ENCODE measurements at regions of chr18 and their contacts with region 1.

Region 1: DNA sequence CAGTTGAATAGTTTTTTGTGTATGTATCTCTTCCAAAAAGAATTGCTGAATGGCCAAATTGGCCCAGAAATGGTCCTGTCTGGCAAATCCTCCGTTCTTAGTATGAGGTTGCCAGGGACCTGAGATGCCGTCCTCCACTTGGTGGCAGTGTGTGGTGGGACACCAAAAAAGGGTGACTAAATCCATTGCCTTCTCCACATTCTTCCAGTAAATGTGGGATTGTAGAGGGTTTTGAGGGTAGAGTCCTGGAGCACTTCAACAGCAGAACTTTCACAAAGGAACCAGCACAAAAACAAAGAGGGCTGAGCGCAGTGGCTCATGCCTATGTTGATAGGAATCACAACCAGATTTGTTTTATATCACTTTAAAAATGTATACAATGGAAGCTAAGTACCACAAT is 199.9 kb downstream of the BCL2 start:
- DNase-seq: no peak
- ATAC-seq: peak in 6 of 8 donors; percentile 29 to 77 (median 67)
- H3K4me3 ChIP-seq: no peak overlapping the region
- H3K27ac ChIP-seq: no peak overlapping the region
- H3K4me1 ChIP-seq: peaks cover 0 to 21% (median 7%) of the 10 kb centered on the region in 9 donors
- H3K27me3 ChIP-seq: no peaks in the 10 kb centered on the region
- CTCF ChIP-seq: peak in 8 of 9 donors; percentile 12 to 68 (median 50)

Region 2: DNA sequence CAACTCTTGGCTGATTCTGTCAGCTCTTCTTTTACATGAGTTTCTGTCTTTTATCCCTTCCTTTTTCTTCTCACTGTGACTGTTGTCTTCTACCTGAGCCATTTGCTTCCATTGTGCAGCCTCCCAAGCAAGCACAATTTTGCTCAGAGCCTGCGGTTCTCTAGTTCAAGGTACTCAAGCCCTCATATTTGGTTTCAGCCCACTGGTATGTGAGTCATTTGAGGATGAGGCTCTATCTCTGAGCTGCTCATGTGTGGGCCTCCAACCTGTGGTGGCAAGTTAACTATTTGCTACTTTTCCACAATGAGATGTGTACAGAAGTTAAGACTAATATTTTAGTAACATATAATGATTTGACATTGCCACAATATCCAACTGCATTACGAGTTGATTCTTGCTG is 221.3 kb before region 1 on chr18:
- intact Hi-C with region 1: no loop called
- DNase-seq: no peak
- ATAC-seq: no peak
- H3K4me3 ChIP-seq: no peak overlapping the region
- H3K27ac ChIP-seq: no peak overlapping the region
- H3K4me1 ChIP-seq: peaks cover 0 to 7% (median 0%) of the 10 kb centered on the region in 9 donors
- H3K27me3 ChIP-seq: no peaks in the 10 kb centered on the region
- CTCF ChIP-seq: no peak

Region 3: GRCh38 chr18:63031375-63031774 is 88.3 kb before region 1 on chr18:
- intact Hi-C with region 1: loop called in 4 of 10 experiments (anchors 5 to 10 kb)
- DNase-seq: no peak
- ATAC-seq: no peak
- H3K4me3 ChIP-seq: no peak overlapping the region
- H3K27ac ChIP-seq: no peak overlapping the region
- H3K4me1 ChIP-seq: no peaks in the 10 kb centered on the region
- H3K27me3 ChIP-seq: no peaks in the 10 kb centered on the region
- CTCF ChIP-seq: no peak

Region 4: DNA sequence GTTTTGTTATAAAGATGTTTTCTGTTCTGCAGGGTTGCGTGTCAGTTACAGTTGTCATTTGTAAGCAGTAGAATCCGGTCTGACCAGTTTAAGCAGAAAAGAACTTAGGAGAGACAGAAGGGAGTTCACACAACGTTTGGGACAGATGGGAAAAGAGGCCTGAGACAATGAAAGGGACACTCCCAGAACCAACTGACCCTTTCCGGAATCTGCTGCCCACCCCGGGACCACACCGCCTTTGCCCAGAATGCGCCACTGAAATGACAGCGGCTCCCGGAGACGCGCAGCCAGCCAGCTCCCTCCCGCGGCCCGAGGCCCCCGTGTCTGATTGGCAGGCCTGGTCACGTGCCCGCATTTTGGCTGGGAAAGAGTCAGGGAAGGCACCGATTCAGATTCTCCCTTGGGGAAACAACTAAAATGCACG is 44.7 kb before region 1 on chr18:
- intact Hi-C with region 1: loop called in 1 of 10 experiments (anchors 5 kb)
- DNase-seq: peak; percentile 78 to 82
- ATAC-seq: peak; percentile 91 to 99 (median 97)
- H3K4me3 ChIP-seq: peak overlapping the region in 9 of 10 donors; percentile 26 to 57 (median 52)
- H3K27ac ChIP-seq: peak overlapping the region in 9 of 10 donors; percentile 23 to 73 (median 56)
- H3K4me1 ChIP-seq: peaks cover 0 to 14% (median 0%) of the 10 kb centered on the region in 9 donors
- H3K27me3 ChIP-seq: no peaks in the 10 kb centered on the region
- CTCF ChIP-seq: peak in 2 of 9 donors; percentile 11 to 18

Region 5: DNA sequence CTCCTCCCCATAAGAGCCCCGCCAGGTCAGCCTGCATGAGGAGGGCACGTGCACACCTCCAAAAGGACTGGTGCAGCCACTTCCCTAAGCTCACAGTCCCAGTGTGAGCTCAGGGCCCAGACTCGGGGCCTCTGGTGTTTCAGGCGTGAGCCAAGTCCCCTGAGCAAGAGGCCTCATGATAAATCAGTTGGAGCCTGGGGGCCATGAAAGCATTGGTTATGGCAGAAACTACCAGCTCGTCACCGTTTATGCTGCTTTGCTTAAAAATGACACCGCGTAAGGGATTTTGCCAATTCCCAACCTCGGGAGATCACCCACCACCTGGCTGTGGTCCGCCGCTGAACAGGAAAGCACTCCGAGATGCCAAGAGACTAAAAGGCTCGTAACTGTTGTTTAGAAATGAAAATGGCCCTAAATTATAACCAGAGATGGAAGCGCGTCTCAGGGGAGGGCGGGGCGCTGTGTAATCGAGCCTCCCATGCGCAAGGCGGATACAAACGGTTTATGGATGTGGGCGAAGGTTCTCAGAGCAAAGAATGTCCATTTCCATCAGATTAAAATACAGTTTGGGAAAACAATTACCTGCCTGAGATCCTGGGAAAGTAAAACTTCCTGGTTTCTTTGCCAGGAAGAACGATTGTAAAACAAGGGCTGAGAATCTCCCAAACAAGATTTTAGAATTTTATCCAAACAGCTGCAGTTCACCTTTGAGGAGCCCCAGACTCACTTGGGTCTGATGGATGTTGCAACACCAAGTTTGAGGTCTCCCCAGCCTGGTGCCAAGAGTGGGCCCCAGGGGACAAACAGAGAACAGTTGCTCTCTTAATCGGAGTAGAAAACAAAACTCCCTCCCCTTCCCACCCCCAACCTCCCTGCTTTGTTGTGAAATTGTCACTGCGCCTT is 58.5 kb after region 1 on chr18:
- intact Hi-C with region 1: loop called in 1 of 10 experiments (anchors 10 kb)
- DNase-seq: peak; percentile 48 to 73
- ATAC-seq: peak; percentile 52 to 80 (median 63)
- H3K4me3 ChIP-seq: peak overlapping the region in 6 of 10 donors; percentile 3 to 46 (median 32)
- H3K27ac ChIP-seq: peak overlapping the region in 9 of 10 donors; percentile 9 to 85 (median 47)
- H3K4me1 ChIP-seq: peaks cover 4 to 71% (median 28%) of the 10 kb centered on the region in 9 donors
- H3K27me3 ChIP-seq: no peaks in the 10 kb centered on the region
- CTCF ChIP-seq: no peak

Region 6: DNA sequence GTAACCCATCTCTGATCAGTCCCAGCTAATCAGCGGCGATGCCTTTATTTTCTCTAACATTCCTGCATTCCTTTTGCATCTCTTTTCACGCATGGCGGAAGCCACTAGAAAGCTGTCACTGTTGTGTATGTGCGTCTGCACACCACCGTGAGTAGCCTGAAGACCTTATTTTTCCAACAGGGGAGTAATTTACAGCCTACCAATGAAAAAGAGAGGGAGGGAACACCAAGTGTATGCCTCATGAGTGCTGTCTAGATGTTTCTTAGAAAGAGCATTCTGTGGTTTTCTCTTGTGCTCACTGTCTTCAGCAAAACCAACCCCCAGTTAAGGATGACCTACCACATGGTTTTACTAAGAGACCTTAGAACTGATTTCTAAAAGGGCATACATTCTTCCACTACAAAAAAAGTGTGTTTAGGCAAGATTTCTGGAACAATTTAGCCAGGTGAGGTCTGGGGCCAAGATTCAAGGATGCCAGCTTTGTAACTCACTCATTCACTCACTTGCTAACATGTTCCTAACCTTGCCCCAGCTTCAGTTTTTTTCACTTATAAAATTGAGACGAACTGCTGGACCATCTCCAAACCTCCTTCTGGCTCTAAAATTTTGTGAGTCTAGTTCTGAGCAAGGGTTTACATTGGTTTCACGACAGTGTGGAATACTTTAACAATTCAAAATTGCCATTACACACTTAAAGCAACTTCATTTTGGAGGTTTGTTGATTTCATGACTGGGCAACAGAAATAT is 148.5 kb after region 1 on chr18:
- intact Hi-C with region 1: loop called in 1 of 10 experiments (anchors 5 kb)
- DNase-seq: no peak
- ATAC-seq: no peak
- H3K4me3 ChIP-seq: no peak overlapping the region
- H3K27ac ChIP-seq: no peak overlapping the region
- H3K4me1 ChIP-seq: peaks cover 0 to 34% (median 16%) of the 10 kb centered on the region in 9 donors
- H3K27me3 ChIP-seq: no peaks in the 10 kb centered on the region
- CTCF ChIP-seq: no peak

Region 7: DNA sequence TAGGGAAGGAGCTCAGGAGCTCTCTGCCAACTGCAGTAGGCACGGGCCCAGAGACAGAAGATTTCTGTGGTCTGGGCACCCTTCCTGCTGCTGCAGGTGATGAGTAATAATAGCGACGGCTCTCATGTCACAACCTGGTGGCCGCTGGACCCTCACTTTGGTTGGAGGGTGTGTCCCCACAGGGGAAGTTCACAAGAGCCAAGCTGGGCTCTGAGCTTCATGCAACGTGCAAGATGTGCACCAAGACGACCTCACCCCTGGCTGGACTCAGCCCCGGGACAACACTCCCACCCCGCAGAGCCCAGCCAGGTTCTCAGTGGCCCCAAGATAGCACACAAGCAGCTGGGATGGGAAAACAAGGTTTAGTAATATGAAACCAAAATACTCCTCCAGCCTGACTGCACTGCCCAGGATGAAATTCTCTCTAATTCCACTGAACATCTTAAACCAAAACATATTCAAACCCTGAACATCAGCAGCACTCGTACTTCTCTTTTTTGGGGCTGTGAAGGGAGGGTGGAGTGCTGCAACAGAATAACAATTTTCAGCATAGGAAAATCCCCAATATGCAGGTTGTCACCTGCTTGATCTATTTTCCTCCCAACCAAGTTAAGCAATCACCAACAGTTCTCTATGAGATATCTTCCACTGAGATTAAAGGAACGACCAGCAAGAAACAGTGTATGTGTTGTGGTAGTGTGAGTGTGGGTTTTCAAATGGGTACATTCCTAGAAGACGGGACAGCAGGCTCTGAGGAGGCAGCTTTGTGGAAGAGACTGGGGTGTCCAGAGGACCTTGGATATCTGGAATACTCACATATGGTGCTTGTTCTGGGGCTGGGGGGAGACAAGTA is 173.4 kb after region 1 on chr18:
- intact Hi-C with region 1: no loop called
- DNase-seq: no peak
- ATAC-seq: peak in 1 of 8 donors; percentile 26
- H3K4me3 ChIP-seq: no peak overlapping the region
- H3K27ac ChIP-seq: peak overlapping the region in 5 of 10 donors; percentile 11 to 31 (median 19)
- H3K4me1 ChIP-seq: peaks cover 0 to 60% (median 41%) of the 10 kb centered on the region in 9 donors
- H3K27me3 ChIP-seq: no peaks in the 10 kb centered on the region
- CTCF ChIP-seq: no peak

Region 8: DNA sequence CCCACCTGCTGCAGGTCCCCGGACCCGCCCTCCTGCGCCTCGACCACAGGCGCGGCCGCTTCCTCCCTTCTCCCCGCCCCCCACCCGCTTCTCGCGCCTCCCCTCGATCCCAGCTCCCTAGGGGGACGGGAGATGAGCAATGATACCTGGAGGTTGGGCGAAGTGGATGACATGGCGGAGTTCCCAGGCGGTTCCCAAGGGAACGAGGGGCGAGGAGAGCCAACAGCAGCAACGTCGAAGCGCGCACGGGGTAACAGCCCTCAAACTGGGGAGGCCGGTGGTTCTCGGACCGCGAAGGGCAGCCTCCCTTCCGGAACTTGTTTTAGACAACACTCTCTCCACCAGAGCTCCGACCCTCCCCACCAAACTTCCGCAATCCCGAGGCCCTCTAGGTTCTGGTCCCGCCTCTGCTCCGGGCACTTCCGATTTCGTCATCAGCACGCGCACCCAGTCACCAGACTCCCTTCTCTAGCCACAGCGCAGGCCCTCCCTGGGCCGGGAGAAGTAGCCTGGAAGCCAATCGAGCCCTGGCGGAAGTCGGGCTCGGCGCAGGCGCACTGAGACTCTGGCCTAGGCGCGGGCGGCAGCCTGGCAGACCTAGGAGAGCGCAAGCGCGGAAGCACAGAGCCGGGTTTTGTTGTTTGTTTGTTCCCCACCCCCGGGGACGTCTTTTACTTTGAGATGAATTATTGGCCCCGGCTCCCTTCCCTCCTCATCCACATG is 302.6 kb after region 1 on chr18 and contains the start of gene VPS4B:
- intact Hi-C with region 1: loop called in 1 of 10 experiments (anchors 10 kb)
- DNase-seq: peak; percentile 99 to 100
- ATAC-seq: peak; percentile 99
- H3K4me3 ChIP-seq: peak within 1 kb of the TSS; percentile 65 to 97 (median 86)
- H3K27ac ChIP-seq: peak within 1 kb of the TSS; percentile 92 to 99 (median 94)
- H3K4me1 ChIP-seq: peaks cover 5 to 47% (median 24%) of the 10 kb centered on the region in 9 donors
- H3K27me3 ChIP-seq: no peaks in the 10 kb centered on the region
- CTCF ChIP-seq: no peak
- total RNA-seq, gene VPS4B: 19.7 to 39.6 (median 22.8) TPM